ENCODE measurements at regions of chr1 and their contacts with region 1.

Region 1: GRCh38 chr1:92858564-92859399 is 26.9 kb downstream of the RPL5 start:
- DNase-seq: peak; percentile 78
- ATAC-seq: peak; percentile 85
- H3K4me3 Mint-ChIP-seq: peak overlapping the region; percentile 11
- H3K27ac Mint-ChIP-seq: peak overlapping the region; percentile 62
- H3K4me1 Mint-ChIP-seq: peaks cover 25% of the 10 kb centered on the region
- H3K27me3 Mint-ChIP-seq: no peaks in the 10 kb centered on the region

Region 2: GRCh38 chr1:92709738-92710137 is 149.0 kb before region 1 on chr1:
- CTCF ChIA-PET with region 1: no interaction called
- POLR2A ChIA-PET with region 1: no interaction called
- DNase-seq: no peak
- ATAC-seq: no peak
- H3K4me3 Mint-ChIP-seq: no peak overlapping the region
- H3K27ac Mint-ChIP-seq: no peak overlapping the region
- H3K4me1 Mint-ChIP-seq: no peaks in the 10 kb centered on the region
- H3K27me3 Mint-ChIP-seq: peaks cover 13% of the 10 kb centered on the region

Region 3: GRCh38 chr1:92792340-92792782 is 66.4 kb before region 1 on chr1:
- CTCF ChIA-PET with region 1: no interaction called
- POLR2A ChIA-PET with region 1: no interaction called
- DNase-seq: no peak
- ATAC-seq: no peak
- H3K4me3 Mint-ChIP-seq: no peak overlapping the region
- H3K27ac Mint-ChIP-seq: no peak overlapping the region
- H3K4me1 Mint-ChIP-seq: no peaks in the 10 kb centered on the region
- H3K27me3 Mint-ChIP-seq: peaks cover 67% of the 10 kb centered on the region

Region 4: GRCh38 chr1:92831762-92832536 is 26.8 kb before region 1 on chr1 and contains the start of gene RPL5:
- CTCF ChIA-PET with region 1: interaction called, 25 read pairs
- POLR2A ChIA-PET with region 1: interaction called, 4 read pairs
- DNase-seq: peak; percentile 98
- ATAC-seq: peak; percentile 91
- H3K4me3 Mint-ChIP-seq: peak within 1 kb of the TSS; percentile 96
- H3K27ac Mint-ChIP-seq: peak within 1 kb of the TSS; percentile 98
- H3K4me1 Mint-ChIP-seq: peaks cover 43% of the 10 kb centered on the region
- H3K27me3 Mint-ChIP-seq: no peaks in the 10 kb centered on the region
- total RNA-seq, gene RPL5: 816 to 821 TPM

Region 5: DNA sequence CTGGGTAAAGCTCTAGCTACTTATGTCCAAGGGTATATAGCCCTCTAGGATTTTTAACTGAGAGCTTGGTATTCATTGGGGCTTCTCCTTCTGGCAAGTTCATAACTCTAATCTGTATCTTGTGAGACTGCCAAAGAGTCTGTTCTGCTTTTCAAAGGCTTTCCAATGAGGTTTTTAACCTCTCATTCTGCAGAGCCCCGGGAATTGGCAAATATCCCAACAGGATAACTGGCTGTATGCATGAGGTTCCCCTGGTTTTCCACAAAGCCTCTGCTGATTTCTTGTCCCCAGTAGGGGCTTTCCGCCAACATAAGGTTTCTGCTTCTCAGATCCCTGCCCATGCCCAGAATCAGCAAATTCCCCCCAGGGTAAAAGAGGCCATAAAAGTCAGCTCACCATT is 13.9 kb after region 1 on chr1:
- CTCF ChIA-PET with region 1: interaction called, 44 read pairs
- POLR2A ChIA-PET with region 1: no interaction called
- DNase-seq: no peak
- ATAC-seq: no peak
- H3K4me3 Mint-ChIP-seq: no peak overlapping the region
- H3K27ac Mint-ChIP-seq: no peak overlapping the region
- H3K4me1 Mint-ChIP-seq: peaks cover 10% of the 10 kb centered on the region
- H3K27me3 Mint-ChIP-seq: no peaks in the 10 kb centered on the region

Region 6: DNA sequence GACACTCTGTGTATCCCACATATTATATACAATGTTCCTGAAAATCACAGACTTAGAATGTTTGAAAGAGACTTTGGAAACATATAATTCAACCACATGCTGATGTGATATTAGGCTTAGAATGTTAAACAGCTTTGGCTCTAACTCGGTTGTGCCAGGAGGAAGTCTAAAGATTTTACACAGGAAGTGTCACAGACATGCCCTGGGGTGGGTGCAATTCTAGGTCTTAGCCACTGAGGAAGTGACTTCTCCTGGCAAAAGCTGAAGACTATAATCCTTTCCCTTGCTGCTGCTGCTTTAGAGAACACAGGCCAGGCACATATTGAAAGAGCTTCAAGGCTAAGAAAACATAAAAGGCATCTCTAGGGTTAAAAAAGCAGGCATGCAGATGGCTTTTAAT is 24.0 kb after region 1 on chr1:
- CTCF ChIA-PET with region 1: interaction called, 44 read pairs
- POLR2A ChIA-PET with region 1: no interaction called
- DNase-seq: peak; percentile 56
- ATAC-seq: peak; percentile 88
- H3K4me3 Mint-ChIP-seq: peak overlapping the region; percentile 3
- H3K27ac Mint-ChIP-seq: peak overlapping the region; percentile 56
- H3K4me1 Mint-ChIP-seq: peaks cover 32% of the 10 kb centered on the region
- H3K27me3 Mint-ChIP-seq: no peaks in the 10 kb centered on the region

Region 7: GRCh38 chr1:92924243-92924900 is 65.6 kb after region 1 on chr1:
- CTCF ChIA-PET with region 1: interaction called, 20 read pairs
- POLR2A ChIA-PET with region 1: no interaction called
- DNase-seq: no peak
- ATAC-seq: no peak
- H3K4me3 Mint-ChIP-seq: no peak overlapping the region
- H3K27ac Mint-ChIP-seq: no peak overlapping the region
- H3K4me1 Mint-ChIP-seq: peaks cover 6% of the 10 kb centered on the region
- H3K27me3 Mint-ChIP-seq: no peaks in the 10 kb centered on the region

Region 8: DNA sequence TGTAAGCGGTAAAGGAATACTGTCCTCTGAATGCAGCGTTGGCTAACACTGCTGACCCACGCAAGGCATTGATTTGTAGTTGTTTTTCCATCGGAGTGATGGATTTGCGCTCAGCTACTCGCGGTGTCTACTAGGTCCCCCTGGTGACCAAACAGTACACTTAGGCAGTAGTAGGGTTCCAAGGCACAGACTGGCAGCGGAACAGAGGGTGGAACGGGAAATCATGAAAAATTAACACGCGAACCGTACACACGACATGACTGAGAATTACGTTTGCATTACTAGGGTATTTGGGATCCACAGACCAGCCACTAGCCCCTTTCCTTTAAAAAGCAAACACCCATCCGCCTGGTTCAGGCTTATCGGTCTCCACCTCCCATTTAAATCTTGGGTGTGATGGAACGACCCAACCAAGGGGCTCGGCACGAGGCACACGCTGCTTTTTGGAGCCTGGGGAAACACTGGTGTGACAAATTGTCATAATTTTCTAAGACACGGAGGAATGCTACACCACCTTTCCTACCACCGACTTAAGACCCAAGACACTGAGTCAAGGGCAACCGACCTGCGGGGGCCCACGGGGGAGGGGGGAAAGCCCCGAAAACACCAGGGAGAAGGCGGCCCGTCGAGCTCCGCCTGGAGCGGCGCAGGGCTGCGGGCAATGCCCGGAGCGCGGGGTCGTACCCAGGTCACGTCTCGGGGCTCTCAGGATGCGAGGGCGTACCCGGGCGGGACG is 101.8 kb after region 1 on chr1:
- CTCF ChIA-PET with region 1: interaction called, 134 read pairs
- POLR2A ChIA-PET with region 1: interaction called, 25 read pairs
- DNase-seq: peak; percentile 81
- ATAC-seq: peak; percentile 54
- H3K4me3 Mint-ChIP-seq: peak overlapping the region; percentile 92
- H3K27ac Mint-ChIP-seq: peak overlapping the region; percentile 96
- H3K4me1 Mint-ChIP-seq: peaks cover 36% of the 10 kb centered on the region
- H3K27me3 Mint-ChIP-seq: no peaks in the 10 kb centered on the region

Region 9: DNA sequence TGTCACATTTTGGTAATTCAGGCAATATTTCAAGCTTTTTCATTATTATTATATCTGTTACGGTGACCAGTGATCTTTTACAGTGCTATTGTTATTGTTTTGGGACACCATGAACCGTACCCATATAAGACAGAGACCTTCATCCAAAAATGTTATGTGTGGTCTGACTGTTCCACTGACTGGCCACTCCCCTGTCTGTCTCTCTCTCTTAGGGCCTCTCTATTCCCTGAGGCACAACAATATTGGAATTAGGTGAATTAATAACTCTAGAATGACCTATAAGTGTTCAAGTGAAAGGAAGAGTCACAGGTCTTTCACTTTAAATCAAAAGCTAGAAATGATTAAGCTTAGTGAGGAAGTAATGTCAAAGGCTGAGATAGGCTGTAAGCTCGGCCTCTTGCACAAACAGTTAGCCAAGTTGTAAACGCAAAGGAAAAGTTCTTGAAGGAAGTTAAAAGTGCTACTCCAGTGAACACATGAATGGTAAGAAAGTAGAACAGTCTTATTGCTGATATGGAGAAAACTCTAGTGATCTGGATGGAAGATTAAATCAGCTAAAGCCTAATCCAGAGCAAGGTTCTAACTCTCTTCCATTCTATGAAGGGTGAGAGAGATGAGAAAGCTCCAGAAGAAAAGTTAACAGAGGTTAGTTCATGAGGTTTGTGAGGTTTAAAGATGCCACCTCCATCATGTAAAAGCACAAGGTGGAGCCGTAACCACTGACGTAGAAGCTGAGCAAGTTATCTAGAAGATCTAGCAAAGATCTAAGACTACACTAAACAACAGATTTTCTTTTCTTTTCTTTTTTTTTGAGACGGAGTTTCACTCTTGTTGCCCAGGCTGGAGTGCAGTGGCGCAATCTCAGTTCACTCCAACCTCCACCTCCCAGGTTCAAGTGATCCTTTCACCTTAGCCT is 122.2 kb after region 1 on chr1:
- CTCF ChIA-PET with region 1: interaction called, 14 read pairs
- POLR2A ChIA-PET with region 1: no interaction called
- DNase-seq: peak; percentile 72
- ATAC-seq: peak; percentile 92
- H3K4me3 Mint-ChIP-seq: peak overlapping the region; percentile 40
- H3K27ac Mint-ChIP-seq: peak overlapping the region; percentile 96
- H3K4me1 Mint-ChIP-seq: peaks cover 64% of the 10 kb centered on the region
- H3K27me3 Mint-ChIP-seq: no peaks in the 10 kb centered on the region